H1 (cell line): ENCODE measurements at regions of chr9 and their contacts with region 1.

Region 1: GRCh38 chr9:133335878-133336811 is at the start of gene SURF6:
- DNase-seq: peak; percentile 64 to 92
- H3K4me3 ChIP-seq: peak within 1 kb of the TSS; percentile 64 to 95 (median 92)
- H3K27ac ChIP-seq: peak within 1 kb of the TSS; percentile 74; the same call in 1 of the 2 replicates
- H3K4me1 ChIP-seq: peaks cover 0 to 9% (median 2%) of the 10 kb centered on the region in 4 experiments; a peak in 1 of 7 replicates
- H3K27me3 ChIP-seq: no peaks in the 10 kb centered on the region
- CTCF ChIP-seq: peak in 1 of 3 experiments; percentile 1; a peak in 1 of 4 replicates
- EP300 ChIP-seq: peak in 1 of 2 experiments; percentile 13; a peak in 1 of 3 replicates
- POLR2A ChIP-seq: peak in 1 of 2 experiments; percentile 82; a peak in 2 of 3 replicates
- RAD21 ChIP-seq: no peak
- total RNA-seq, gene SURF6: 23.7 and 26.7 TPM in 2 replicates

Region 2: GRCh38 chr9:133294257-133294656 is 41.9 kb before region 1 on chr9:
- CTCF ChIA-PET with region 1: no interaction called
- POLR2A ChIA-PET with region 1: no interaction called
- DNase-seq: no peak
- H3K4me3 ChIP-seq: no peak overlapping the region
- H3K27ac ChIP-seq: no peak overlapping the region
- H3K4me1 ChIP-seq: no peaks in the 10 kb centered on the region
- H3K27me3 ChIP-seq: no peaks in the 10 kb centered on the region
- CTCF ChIP-seq: no peak
- EP300 ChIP-seq: no peak
- POLR2A ChIP-seq: no peak
- RAD21 ChIP-seq: no peak

Region 3: GRCh38 chr9:133347985-133348717 is 12.0 kb after region 1 on chr9 and contains the starts of genes MED22 and RPL7A:
- CTCF ChIA-PET with region 1: interaction called, 22 read pairs
- POLR2A ChIA-PET with region 1: interaction called, 303 read pairs
- DNase-seq: peak; percentile 77 to 93
- H3K4me3 ChIP-seq: peak within 1 kb of the TSS; percentile 93 to 100 (median 96)
- H3K27ac ChIP-seq: peak within 1 kb of the TSS; percentile 99
- H3K4me1 ChIP-seq: peaks cover 0 to 10% (median 7%) of the 10 kb centered on the region in 4 experiments; a peak in 6 of 7 replicates
- H3K27me3 ChIP-seq: no peaks in the 10 kb centered on the region
- CTCF ChIP-seq: no peak
- EP300 ChIP-seq: no peak
- POLR2A ChIP-seq: peak in 1 of 2 experiments; percentile 97; a peak in 1 of 3 replicates
- RAD21 ChIP-seq: no peak
- total RNA-seq, gene MED22: 56.4 and 61.8 TPM in 2 replicates
- total RNA-seq, gene RPL7A: 2,578 and 2,633 TPM in 2 replicates